Activated naive CD4-positive, alpha-beta T cell treated with anti-CD3 and anti-CD28 coated beads for 36 hours (primary cell): ENCODE measurements at regions of chr18 and their contacts with region 1.

Region 1: GRCh38 chr18:40523287-40523686 is 1431.7 kb upstream of the PIK3C3 start:
- DNase-seq: no peak
- H3K4me3 Mint-ChIP-seq: no peak overlapping the region
- H3K27ac Mint-ChIP-seq: no peak overlapping the region
- H3K4me1 Mint-ChIP-seq: no peaks in the 10 kb centered on the region
- H3K27me3 Mint-ChIP-seq: no peaks in the 10 kb centered on the region

Region 2: GRCh38 chr18:40485318-40485717 is 38.0 kb before region 1 on chr18:
- CTCF ChIA-PET with region 1: no interaction called
- intact Hi-C with region 1: loop called (anchors 1 kb)
- DNase-seq: no peak
- H3K4me3 Mint-ChIP-seq: no peak overlapping the region
- H3K27ac Mint-ChIP-seq: no peak overlapping the region
- H3K4me1 Mint-ChIP-seq: no peaks in the 10 kb centered on the region
- H3K27me3 Mint-ChIP-seq: no peaks in the 10 kb centered on the region

Region 3: GRCh38 chr18:40553029-40553428 is 29.7 kb after region 1 on chr18:
- CTCF ChIA-PET with region 1: no interaction called
- intact Hi-C with region 1: no loop called
- DNase-seq: no peak
- H3K4me3 Mint-ChIP-seq: no peak overlapping the region
- H3K27ac Mint-ChIP-seq: no peak overlapping the region
- H3K4me1 Mint-ChIP-seq: no peaks in the 10 kb centered on the region
- H3K27me3 Mint-ChIP-seq: no peaks in the 10 kb centered on the region

Region 4: GRCh38 chr18:40565805-40566509 is 42.7 kb after region 1 on chr18:
- CTCF ChIA-PET with region 1: no interaction called
- intact Hi-C with region 1: no loop called
- DNase-seq: no peak
- H3K4me3 Mint-ChIP-seq: no peak overlapping the region
- H3K27ac Mint-ChIP-seq: no peak overlapping the region
- H3K4me1 Mint-ChIP-seq: no peaks in the 10 kb centered on the region
- H3K27me3 Mint-ChIP-seq: no peaks in the 10 kb centered on the region

Region 5: DNA sequence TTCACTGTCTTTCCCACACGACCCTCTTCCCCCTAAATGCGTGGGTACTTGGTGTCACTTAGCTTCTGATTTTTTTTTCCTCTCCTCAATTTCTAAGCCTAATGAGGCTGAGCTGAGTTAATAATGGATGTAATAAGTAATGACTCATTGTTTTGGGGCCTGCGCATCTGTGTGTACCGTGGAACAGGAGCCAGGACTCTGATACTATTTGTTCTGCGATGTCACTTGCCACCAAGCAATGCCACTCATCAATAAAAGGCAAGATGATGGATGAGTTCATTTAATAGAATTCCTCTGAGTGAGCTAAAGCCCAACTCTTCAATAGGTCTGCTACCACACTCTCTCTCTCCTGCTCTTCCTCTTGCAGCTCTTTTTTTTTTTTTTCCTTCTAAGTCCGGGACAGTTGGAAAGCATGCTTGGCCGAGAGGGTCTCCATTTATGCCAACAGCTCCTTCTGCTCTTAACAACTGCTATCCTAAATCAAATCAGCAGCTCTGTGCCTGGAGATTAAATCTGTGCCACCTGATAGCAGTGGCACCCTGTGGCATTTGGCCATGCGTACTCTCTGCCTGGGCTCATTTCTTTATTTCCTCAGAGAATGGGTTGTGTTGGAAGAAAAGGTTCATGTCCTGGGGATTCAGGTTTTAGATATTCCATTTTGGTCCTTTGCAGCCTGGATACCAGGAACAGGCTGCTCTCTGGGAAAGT is 147.5 kb after region 1 on chr18:
- CTCF ChIA-PET with region 1: no interaction called
- intact Hi-C with region 1: no loop called
- DNase-seq: no peak
- H3K4me3 Mint-ChIP-seq: no peak overlapping the region
- H3K27ac Mint-ChIP-seq: peak overlapping the region; percentile 54
- H3K4me1 Mint-ChIP-seq: no peaks in the 10 kb centered on the region
- H3K27me3 Mint-ChIP-seq: no peaks in the 10 kb centered on the region